Sigmoid colon (tissue), 7 donors: ENCODE measurements at regions of chr2 and their contacts with region 1.

Region 1: GRCh38 chr2:85602476-85603234 is at the start of gene TMEM150A:
- DNase-seq: peak; percentile 97
- H3K4me3 ChIP-seq: peak within 1 kb of the TSS; percentile 69 to 85 (median 77)
- H3K27ac ChIP-seq: peak within 1 kb of the TSS; percentile 86 to 97 (median 92)
- H3K4me1 ChIP-seq: peaks cover 0 to 48% (median 44%) of the 10 kb centered on the region in 4 donors
- H3K27me3 ChIP-seq: no peaks in the 10 kb centered on the region
- CTCF ChIP-seq: peak in 1 of 4 experiments; percentile 39
- EP300 ChIP-seq: no peak
- POLR2A ChIP-seq: peak in 1 of 2 donors; percentile 39
- total RNA-seq, gene TMEM150A: 18.4 to 29.9 (median 22.1) TPM

Region 2: GRCh38 chr2:85376291-85377065 is 226.2 kb before region 1 on chr2:
- intact Hi-C with region 1: no loop called
- DNase-seq: no peak
- H3K4me3 ChIP-seq: no peak overlapping the region
- H3K27ac ChIP-seq: no peak overlapping the region
- H3K4me1 ChIP-seq: no peaks in the 10 kb centered on the region
- H3K27me3 ChIP-seq: no peaks in the 10 kb centered on the region
- CTCF ChIP-seq: no peak
- EP300 ChIP-seq: no peak
- POLR2A ChIP-seq: no peak

Region 3: DNA sequence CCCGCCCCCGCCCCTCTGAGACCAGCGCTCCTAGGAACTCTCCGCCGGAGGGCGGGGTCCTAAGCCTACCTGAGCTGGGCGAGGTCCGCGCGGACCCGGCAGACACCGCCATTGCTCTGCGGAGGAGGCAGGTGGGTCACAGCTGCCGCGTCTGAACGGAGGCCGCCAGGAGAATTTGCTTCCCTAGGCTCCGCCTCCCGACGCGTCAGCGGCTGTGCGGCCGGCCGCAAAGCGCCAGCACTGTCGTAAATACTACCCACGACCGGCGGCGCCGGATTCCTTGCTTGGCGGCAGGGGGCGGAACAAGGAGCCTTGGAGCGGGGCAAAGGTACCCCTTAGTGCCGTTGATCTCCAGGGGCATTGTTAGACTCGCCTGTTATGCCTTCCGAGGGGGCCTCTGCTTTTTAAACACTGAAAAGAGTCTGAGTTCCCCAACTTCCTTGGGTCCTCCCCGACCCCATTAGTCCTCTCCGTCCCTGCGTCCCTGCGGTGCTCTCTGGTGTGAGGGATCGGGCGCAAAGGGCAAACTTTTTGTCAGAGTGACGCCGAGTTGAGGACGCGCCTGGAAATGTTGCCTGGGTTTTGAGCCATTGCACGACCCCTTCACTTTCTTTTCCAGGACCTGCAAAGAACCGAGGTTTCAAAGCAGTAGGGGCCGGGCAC is 41.2 kb before region 1 on chr2 and contains the start of gene GGCX:
- intact Hi-C with region 1: loop called (anchors 5 kb)
- DNase-seq: peak; percentile 97
- H3K4me3 ChIP-seq: peak within 1 kb of the TSS; percentile 67 to 86 (median 78)
- H3K27ac ChIP-seq: peak within 1 kb of the TSS; percentile 85 to 90 (median 88)
- H3K4me1 ChIP-seq: peaks cover 0 to 23% (median 17%) of the 10 kb centered on the region in 4 donors
- H3K27me3 ChIP-seq: no peaks in the 10 kb centered on the region
- CTCF ChIP-seq: peak in 1 of 4 experiments; percentile 26
- EP300 ChIP-seq: peak in 1 of 4 donors; percentile 69
- POLR2A ChIP-seq: peak; percentile 75 to 83
- total RNA-seq, gene GGCX: 14.9 to 25.3 (median 24.7) TPM